HEK293 (cell line): ENCODE measurements at regions of chr4 and their contacts with region 1.

Region 1: GRCh38 chr4:140851032-140851636 is 94.9 kb upstream of the TBC1D9 start:
- H3K4me3 ChIP-seq: no peak overlapping the region
- H3K27ac ChIP-seq: no peak overlapping the region
- H3K4me1 ChIP-seq: no peaks in the 10 kb centered on the region
- CTCF ChIP-seq: peak; percentile 66

Region 2: GRCh38 chr4:140609548-140610425 is 241.3 kb before region 1 on chr4:
- CTCF ChIA-PET with region 1: interaction called, 13 read pairs
- POLR2A ChIA-PET with region 1: no interaction called
- H3K4me3 ChIP-seq: no peak overlapping the region
- H3K27ac ChIP-seq: no peak overlapping the region
- H3K4me1 ChIP-seq: no peaks in the 10 kb centered on the region
- CTCF ChIP-seq: no peak